ENCODE measurements at regions of chr1 and their contacts with region 1.

Region 1: DNA sequence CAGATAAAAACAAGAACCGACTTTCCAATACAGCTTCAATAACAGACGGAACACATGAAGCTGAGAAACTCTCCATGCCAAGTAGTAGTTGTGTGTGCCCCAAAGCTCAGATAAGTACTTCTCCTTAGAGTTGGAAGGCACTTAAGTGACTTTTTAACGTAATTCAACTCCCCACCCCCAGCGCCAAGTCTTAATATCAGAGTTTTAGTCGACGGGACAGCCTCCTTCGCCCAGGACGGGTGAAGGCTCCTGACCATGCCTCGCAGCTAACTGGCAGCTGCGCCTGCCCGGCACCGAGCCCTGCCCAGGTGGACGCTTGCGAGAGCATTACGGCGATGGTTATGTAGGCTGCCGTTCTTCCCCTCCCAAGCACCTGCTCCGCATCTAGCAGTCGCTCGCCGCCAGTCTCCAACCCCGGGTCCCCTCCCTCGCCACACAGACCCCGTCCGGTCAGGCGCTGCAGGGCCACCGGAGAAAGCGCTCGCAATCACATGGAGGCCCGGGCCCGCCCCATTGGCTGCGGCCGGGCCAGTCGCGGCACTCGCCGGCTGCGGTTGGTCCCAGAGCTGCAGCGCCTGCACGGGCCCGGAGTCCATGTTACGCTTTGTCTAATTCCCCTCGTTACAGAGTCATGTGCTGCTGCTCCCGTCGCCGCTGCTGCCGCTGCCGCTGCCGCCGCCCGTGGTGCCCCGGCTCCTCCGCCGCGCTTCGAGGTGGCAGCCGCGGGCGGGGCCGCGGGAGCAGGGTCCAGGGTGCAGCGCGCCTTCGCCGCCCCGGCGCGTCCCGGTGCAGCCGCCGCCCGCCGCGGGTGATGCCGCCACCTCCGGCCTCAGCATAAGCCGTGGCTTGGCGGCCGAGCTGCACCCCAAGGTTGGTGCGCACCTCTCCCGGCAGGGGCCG is at the start of gene LRRC8D:
- DNase-seq: peak; percentile 10 to 81 (median 64)
- ATAC-seq: peak; percentile 52
- H3K4me3 ChIP-seq: peak within 1 kb of the TSS; percentile 78 to 82
- H3K4me3 Mint-ChIP-seq: peak within 1 kb of the TSS; percentile 87
- H3K27ac ChIP-seq: peak within 1 kb of the TSS; percentile 51 to 63
- H3K27ac Mint-ChIP-seq: peak within 1 kb of the TSS; percentile 91
- H3K4me1 ChIP-seq: peaks cover 23% of the 10 kb centered on the region
- H3K4me1 Mint-ChIP-seq: peaks cover 44% of the 10 kb centered on the region
- H3K27me3 ChIP-seq: no peaks in the 10 kb centered on the region
- H3K27me3 Mint-ChIP-seq: no peaks in the 10 kb centered on the region
- CTCF ChIP-seq: no peak
- total RNA-seq, gene LRRC8D: 14.2 to 16.9 TPM

Region 2: DNA sequence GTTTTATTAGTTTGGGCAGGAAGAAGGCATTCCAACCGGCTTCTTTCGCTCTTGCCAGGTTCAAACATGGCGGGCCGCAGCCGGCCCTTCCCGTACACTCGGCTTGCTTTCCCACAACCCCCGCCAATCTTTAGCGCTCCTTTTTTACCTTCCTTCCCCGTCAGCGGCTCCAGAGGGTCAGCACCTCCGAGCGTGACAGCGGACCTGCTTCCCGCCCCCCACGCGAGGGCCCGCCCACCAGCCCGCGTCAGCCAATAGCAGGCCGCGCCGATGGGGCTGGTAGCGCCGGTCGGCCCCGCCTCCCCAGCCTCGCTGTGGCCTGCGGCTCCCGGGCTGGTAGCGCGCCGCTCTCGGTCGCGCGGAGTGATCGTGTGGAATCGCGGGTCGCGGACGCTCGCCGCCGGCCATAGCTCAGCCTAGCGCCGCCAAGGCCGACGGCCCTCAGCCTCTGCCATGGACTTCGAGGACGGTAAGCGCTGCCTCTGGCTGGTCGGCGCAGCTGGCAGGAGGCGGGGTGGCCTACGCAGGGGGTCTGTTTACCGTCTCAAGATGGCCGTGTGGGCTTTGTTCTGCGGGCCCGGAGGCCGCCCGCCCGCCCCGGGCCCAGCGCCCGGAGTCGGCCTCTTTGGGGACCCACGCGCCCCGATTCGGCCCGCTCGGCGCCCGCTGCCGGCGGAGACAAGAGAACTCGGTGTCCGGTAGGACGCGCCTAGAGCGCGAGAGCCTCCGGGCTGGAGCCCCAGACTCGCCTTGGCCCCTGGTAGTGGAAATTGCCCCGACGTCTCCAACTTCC is 174.3 kb after region 1 on chr1 and contains the start of gene ZNF326:
- CTCF ChIA-PET with region 1: no interaction called
- POLR2A ChIA-PET with region 1: no interaction called
- intact Hi-C with region 1: loop called (anchors 1 to 2 kb)
- DNase-seq: peak; percentile 89 to 96 (median 93)
- ATAC-seq: peak; percentile 97
- H3K4me3 ChIP-seq: peak within 1 kb of the TSS; percentile 72 to 93
- H3K4me3 Mint-ChIP-seq: peak within 1 kb of the TSS; percentile 99
- H3K27ac ChIP-seq: peak within 1 kb of the TSS; percentile 78 to 82
- H3K27ac Mint-ChIP-seq: peak within 1 kb of the TSS; percentile 96
- H3K4me1 ChIP-seq: peaks cover 25% of the 10 kb centered on the region
- H3K4me1 Mint-ChIP-seq: peaks cover 35% of the 10 kb centered on the region
- H3K27me3 ChIP-seq: no peaks in the 10 kb centered on the region
- H3K27me3 Mint-ChIP-seq: no peaks in the 10 kb centered on the region
- CTCF ChIP-seq: no peak
- total RNA-seq, gene ZNF326: 55.5 to 59.1 TPM